ENCODE measurements at regions of chr16 and their contacts with region 1.

Region 1: DNA sequence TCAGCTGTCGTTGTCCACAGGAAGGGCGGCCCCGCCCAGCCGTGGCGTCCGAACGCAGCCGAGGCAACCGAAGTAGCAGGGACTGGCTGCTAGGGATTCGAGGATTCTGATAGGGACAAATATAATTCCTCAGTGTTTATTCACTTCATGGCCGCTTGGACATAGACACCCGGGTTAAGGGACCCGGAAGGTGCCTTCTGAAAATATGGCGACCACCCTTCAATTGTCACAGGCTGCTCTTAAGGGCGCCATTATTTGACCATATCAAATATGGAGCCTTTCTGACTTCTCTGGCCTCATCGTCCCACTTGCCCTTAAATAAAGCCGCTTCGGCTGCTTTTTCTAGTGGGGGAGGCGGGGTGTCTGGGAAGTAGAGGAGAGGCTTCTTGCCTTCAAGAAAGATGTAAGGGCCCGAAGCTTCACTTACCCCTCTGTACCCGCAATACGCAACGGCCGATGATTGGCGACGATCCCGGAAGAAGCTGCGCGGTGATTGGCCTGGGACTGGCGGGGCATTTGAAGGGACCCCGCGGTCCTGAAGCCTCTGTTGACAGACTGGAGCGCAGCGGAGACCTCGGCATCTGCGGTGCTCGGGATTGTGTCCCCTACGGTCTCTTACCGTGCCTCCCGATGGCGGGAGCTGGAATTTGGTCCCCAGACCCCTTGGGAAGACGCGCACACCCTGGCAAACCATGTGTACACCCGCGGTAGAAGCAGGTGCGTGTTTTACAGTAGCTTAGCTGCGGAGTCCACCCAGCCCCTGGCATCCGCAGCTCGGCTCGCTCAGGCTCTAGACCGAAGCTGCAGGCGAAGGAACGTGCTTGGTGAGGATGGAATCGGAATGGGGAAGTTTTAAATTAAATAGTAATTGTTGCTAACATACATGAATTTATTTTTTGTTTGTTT is at the start of gene ZNF688:
- H3K4me3 ChIP-seq: peak within 1 kb of the TSS; percentile 64
- H3K27ac ChIP-seq: peak within 1 kb of the TSS; percentile 96
- H3K4me1 ChIP-seq: peaks cover 5% of the 10 kb centered on the region; the same call in 1 of the 2 replicates
- CTCF ChIP-seq: no peak; the same call in 1 of the 2 replicates

Region 2: DNA sequence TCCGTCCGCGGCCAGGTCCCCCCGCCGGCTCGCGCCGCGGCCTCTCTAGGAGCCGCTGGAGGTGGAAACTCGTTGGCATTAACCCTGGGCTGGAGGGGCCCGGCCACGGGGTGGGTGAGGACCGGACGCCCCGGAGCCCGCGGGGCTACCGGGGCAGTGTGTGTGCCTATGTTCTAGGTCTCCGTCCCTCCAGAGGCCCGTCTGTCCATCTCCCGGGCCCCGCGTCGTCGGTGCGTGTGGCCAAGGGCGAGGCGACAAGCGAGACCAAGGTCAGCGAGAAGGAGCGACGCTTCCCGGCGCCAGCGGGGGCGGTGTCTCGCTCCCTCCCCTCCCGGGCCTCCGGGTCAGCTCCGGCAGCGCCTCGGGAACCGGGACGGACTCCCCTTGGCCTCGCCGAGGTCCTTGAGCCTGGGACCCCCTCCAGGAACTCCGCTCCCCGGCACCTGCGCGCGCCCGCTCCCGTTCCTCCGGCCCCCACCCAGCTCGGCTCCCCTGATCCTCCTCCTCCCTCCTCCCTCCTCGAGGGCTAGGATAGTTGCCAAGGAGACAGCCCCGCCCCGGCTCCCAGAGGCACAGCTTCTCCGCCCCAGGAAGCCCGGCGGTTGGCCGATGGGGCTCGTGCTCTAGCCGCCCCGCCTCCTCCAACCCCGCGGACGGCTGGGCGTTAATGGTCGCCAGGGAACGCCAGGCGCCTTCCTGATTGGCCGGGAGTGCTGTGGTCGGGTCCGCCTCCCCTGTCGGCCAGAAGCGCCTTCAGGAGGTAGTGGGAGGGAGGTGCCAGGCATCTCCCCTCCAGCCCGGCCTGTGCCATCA is 44.9 kb before region 1 on chr16:
- CTCF ChIA-PET with region 1: no interaction called
- POLR2A ChIA-PET with region 1: interaction called, 12 read pairs
- H3K4me3 ChIP-seq: peak overlapping the region; percentile 82
- H3K27ac ChIP-seq: peak overlapping the region; percentile 92
- H3K4me1 ChIP-seq: peaks cover 9% of the 10 kb centered on the region
- CTCF ChIP-seq: peak; percentile 98

Region 3: GRCh38 chr16:30557957-30558788 is 13.8 kb before region 1 on chr16 and contains the start of gene ZNF764:
- CTCF ChIA-PET with region 1: interaction called, 5 read pairs
- POLR2A ChIA-PET with region 1: interaction called, 69 read pairs
- H3K4me3 ChIP-seq: peak within 1 kb of the TSS; percentile 88
- H3K27ac ChIP-seq: peak within 1 kb of the TSS; percentile 98
- H3K4me1 ChIP-seq: peaks cover 2% of the 10 kb centered on the region; the same call in 1 of the 2 replicates
- CTCF ChIP-seq: peak; percentile 84

Region 4: DNA sequence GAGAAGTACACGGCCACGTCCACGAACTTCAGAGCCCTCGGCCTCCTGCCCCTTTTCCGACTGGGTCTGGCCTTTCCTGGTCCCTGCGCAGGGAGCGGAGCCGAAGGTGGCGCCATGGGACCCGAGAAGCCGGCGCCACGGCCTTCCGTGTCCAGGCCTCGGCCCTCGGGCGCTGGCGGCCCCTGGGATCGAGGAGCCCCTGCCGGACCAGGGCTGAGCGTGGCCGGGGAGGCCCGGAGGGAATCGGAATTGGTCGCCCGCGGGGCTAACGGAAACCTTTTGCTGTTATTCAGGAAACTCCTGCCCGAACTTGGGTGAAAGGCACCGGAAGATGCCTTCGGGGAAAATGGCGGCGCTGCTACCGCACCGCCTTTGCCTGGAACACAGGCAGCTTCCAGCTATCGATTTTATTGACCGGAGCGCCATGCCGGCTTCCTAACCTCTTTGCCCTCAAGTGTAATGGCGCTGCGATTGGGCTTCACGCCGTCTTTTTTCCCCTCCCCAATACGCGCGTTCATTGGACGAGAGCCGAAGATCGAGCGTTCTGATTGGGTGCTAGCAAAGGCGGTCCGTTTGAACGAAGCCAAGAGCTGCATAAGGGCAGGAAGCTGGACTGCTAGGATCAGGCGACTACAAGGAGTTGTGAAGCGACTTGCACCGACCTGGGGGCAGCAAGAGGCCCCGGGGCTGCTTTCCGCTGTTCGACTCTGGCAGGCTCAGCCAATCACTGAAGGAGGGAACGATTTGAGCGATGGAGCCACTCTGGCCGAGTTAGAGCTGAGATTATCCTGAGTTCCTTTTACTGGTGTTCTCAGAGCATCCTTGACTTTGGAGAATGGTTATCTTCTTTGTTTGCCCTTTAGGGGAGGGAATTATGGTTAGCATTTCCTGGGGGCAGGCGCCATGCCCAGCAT is 38.2 kb after region 1 on chr16 and contains the start of gene ZNF689:
- CTCF ChIA-PET with region 1: interaction called, 10 read pairs
- POLR2A ChIA-PET with region 1: interaction called, 18 read pairs
- H3K4me3 ChIP-seq: peak within 1 kb of the TSS; percentile 81
- H3K27ac ChIP-seq: peak within 1 kb of the TSS; percentile 96
- H3K4me1 ChIP-seq: no peaks in the 10 kb centered on the region
- CTCF ChIP-seq: peak; percentile 78

Measured in HEK293 (cell line).